CD4-positive, alpha-beta memory T cell (primary cell): ENCODE measurements at regions of chr3 and their contacts with region 1.

Region 1: DNA sequence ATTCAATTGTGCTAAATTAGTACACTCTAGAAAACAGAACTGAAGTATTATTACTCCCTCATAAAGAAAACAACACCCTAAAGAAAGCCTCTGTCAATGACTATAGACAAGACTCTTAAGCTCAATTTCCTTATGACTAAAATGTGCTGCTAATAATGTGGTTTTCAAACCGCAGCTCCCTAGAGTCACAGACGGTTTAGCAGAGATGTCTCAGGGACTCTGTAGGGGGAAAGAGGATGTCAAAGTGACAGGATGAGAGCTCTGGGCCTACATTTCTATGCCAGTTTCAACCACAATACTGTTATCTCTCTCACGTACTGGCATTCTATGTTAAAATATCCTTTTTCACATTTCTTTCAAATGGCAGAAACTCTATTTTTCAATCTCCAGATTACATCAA is 37.6 kb upstream of the WDR49 start:
- DNase-seq: peak; percentile 25 to 68 (median 36)
- H3K4me3 ChIP-seq: no peak overlapping the region
- H3K4me3 Mint-ChIP-seq: peak overlapping the region in 3 of 8 donors; percentile 7 to 29 (median 12)
- H3K27ac ChIP-seq: no peak overlapping the region
- H3K27ac Mint-ChIP-seq: peak overlapping the region; percentile 54 to 85 (median 73)
- H3K4me1 ChIP-seq: peaks cover 16% of the 10 kb centered on the region
- H3K4me1 Mint-ChIP-seq: peaks cover 19 to 39% (median 23%) of the 10 kb centered on the region in 4 donors
- H3K27me3 ChIP-seq: no peaks in the 10 kb centered on the region
- H3K27me3 Mint-ChIP-seq: no peaks in the 10 kb centered on the region

Region 2: DNA sequence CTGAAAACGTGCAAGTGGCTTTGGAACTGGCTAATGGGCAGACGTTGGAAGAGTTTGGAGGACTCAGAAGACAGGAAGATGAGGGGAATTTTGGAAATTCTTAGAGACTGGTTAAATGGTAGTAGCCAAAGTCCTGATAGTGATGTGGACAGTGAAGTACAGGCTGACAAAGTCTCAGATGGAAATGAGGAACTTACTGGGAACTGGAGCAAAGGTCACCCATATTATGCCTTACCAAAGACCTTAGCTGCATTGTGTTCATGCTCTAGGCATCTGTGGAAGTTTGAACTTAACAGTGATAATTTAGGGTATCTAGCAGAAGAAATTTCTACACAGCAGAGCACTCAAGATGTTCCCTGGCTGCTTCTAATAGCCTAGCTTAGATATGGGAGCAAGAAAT is 189.0 kb before region 1 on chr3:
- CTCF ChIA-PET with region 1: no interaction called
- POLR2A ChIA-PET with region 1: no interaction called
- intact Hi-C with region 1: no loop called
- DNase-seq: no peak
- H3K4me3 ChIP-seq: no peak overlapping the region
- H3K4me3 Mint-ChIP-seq: no peak overlapping the region
- H3K27ac ChIP-seq: no peak overlapping the region
- H3K27ac Mint-ChIP-seq: no peak overlapping the region
- H3K4me1 ChIP-seq: no peaks in the 10 kb centered on the region
- H3K4me1 Mint-ChIP-seq: no peaks in the 10 kb centered on the region
- H3K27me3 ChIP-seq: no peaks in the 10 kb centered on the region
- H3K27me3 Mint-ChIP-seq: no peaks in the 10 kb centered on the region

Region 3: DNA sequence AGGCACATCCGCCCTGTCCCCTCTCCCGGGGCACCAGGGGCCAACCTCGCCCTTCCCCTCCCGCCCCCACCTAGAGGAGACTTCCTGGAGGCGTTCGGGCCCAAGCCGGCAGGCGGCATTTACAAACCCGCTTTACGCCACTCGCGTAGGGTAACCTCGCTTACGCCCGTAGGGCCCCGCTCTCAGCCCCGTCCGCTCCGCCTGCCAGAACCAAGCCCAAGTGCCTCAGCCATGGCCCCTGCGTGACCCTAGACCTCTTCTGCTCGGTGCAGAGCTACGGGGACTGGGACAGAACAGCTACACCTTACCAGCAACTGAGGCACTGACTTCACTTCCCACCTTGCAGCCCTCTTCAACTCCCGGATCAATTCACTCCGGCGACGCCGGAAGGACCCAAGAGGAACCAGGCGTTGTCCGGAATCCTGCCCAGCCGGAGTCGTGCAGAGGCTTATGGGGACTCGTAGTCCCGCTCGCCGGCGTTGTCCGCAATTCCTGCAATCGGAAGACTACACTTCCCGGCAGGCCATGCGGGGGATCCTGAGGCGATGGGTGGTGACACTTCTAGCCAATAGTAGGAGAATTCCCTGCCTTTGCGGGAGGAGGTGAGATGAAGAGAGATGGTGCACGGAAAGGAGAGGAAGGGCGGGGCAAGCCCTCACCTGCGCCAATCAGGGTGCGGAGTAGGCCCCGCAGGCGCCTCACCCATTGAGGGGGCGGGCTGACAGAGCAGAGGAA is 43.3 kb after region 1 on chr3 and contains the start of gene PDCD10:
- CTCF ChIA-PET with region 1: no interaction called
- POLR2A ChIA-PET with region 1: interaction called, 7 read pairs
- intact Hi-C with region 1: loop called (anchors 2 kb)
- DNase-seq: peak; percentile 98 to 99 (median 99)
- H3K4me3 ChIP-seq: peak within 1 kb of the TSS; percentile 99 to 100
- H3K4me3 Mint-ChIP-seq: no peak within 1 kb of the TSS
- H3K27ac ChIP-seq: peak within 1 kb of the TSS; percentile 85
- H3K27ac Mint-ChIP-seq: no peak within 1 kb of the TSS
- H3K4me1 ChIP-seq: peaks cover 56% of the 10 kb centered on the region
- H3K4me1 Mint-ChIP-seq: peaks cover 8 to 32% (median 18%) of the 10 kb centered on the region in 4 donors
- H3K27me3 ChIP-seq: no peaks in the 10 kb centered on the region
- H3K27me3 Mint-ChIP-seq: no peaks in the 10 kb centered on the region
- total RNA-seq, gene PDCD10: 43.8 to 50.0 TPM

Region 4: GRCh38 chr3:168220556-168220955 is 529.2 kb after region 1 on chr3:
- CTCF ChIA-PET with region 1: no interaction called
- POLR2A ChIA-PET with region 1: no interaction called
- intact Hi-C with region 1: no loop called
- DNase-seq: no peak
- H3K4me3 ChIP-seq: no peak overlapping the region
- H3K4me3 Mint-ChIP-seq: no peak overlapping the region
- H3K27ac ChIP-seq: no peak overlapping the region
- H3K27ac Mint-ChIP-seq: no peak overlapping the region
- H3K4me1 ChIP-seq: no peaks in the 10 kb centered on the region
- H3K4me1 Mint-ChIP-seq: no peaks in the 10 kb centered on the region
- H3K27me3 ChIP-seq: no peaks in the 10 kb centered on the region
- H3K27me3 Mint-ChIP-seq: no peaks in the 10 kb centered on the region